ENCODE measurements at regions of chr7 and their contacts with region 1.

Region 1: GRCh38 chr7:131625817-131626372 is 69.5 kb upstream of the PODXL start:
- DNase-seq: peak; percentile 55 to 69
- ATAC-seq: peak in 3 of 4 donors; percentile 40 to 56 (median 41)
- H3K4me3 ChIP-seq: no peak overlapping the region
- H3K27ac ChIP-seq: no peak overlapping the region
- H3K4me1 ChIP-seq: no peaks in the 10 kb centered on the region
- H3K27me3 ChIP-seq: no peaks in the 10 kb centered on the region
- CTCF ChIP-seq: no peak

Region 2: DNA sequence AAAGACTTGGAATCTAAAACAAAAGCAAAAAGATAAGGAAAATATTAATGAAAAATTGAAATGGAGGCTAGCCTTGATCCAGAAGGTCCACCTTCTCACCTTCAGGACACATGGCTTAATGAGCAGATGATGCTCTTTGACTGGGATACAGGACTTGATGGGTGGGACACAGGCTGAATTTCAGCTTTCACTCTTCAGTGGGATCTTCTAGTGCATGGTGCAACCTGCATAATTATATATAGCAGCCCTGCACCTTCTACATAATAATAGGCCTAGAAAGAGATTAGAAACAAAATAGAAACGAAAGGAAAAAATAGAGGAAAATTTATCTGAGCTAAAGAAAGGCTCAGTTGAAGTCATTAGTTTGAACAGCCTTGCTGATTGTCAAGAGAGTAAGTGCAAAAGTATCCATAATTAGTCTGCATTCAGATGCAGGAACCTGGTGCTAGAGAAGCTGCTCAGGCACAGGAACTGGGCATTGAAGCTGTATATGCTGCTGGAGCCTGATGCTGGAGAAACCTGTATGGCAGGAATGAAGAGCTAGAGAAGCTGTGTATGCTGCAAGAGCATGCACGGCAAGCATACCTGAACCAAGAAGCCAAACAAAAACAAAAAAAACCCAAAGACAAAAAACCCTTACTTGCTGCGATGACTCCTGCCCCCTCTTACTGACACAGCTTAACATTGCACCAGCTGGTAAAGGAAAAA is 278.9 kb before region 1 on chr7:
- intact Hi-C with region 1: no loop called
- DNase-seq: no peak
- ATAC-seq: peak in 2 of 4 donors; percentile 25 to 40
- H3K4me3 ChIP-seq: no peak overlapping the region
- H3K27ac ChIP-seq: no peak overlapping the region
- H3K4me1 ChIP-seq: peaks cover 37% of the 10 kb centered on the region
- H3K27me3 ChIP-seq: no peaks in the 10 kb centered on the region
- CTCF ChIP-seq: no peak

Region 3: DNA sequence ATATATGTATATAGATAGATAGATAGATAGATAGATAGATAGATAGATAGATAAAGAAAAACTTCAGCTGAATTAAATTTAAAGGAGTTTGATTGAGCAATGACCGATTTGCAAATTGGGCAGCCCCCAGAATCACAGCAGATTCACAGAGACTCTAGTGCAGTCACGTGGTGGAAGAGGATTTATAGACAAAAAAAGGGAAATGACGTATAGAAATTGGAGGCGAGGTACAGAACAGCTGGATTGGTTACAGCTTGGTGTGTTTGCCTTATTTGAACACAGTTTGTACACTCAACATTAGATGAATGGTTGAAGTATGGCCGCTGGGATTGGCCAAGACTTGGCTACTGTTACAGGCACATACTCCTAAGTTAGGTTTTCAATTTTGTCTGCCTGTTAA is 61.3 kb before region 1 on chr7:
- intact Hi-C with region 1: loop called in 1 of 2 experiments (anchors 5 kb)
- DNase-seq: no peak
- ATAC-seq: no peak
- H3K4me3 ChIP-seq: no peak overlapping the region
- H3K27ac ChIP-seq: no peak overlapping the region
- H3K4me1 ChIP-seq: no peaks in the 10 kb centered on the region
- H3K27me3 ChIP-seq: peaks cover 0 to 3% (median 0%) of the 10 kb centered on the region in 3 donors
- CTCF ChIP-seq: no peak

Region 4: DNA sequence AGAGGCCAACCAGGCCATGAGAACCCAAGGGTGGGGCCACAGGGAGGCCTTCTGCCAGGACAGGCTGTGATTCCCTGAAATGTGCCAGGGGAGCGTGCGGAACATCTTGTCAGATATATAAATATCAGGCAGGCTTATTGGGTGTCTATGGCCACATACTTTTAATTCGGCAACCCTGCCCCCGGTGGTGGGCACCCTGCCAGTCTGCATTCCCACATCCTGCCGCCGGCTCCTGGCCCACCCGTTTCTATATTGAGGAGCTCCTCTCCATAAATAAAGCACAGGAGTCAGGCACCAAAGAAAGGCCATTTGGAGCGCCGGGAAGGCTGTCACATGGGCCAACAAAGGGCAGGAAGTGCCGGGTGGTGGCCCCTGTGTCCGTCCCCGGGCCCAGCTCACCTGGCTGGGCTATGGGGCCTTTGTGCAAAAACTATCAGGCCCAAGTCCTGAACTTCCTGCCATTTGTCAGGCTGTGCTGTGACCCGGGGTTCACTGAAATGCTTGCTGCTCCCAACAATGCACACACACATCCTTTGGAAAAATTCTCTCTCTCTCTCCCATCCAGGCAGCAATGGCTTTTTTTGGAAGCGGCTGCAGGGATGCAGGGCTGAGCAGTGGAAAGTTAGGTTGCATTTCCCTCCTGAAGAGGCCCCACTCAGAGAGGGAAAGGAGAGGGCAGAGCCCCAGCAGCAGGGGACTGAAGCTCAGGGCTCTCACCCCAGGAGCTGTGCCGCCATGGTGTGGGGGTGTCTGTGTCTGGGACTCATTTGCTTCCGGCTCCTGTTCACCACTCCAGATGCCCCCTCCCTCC is 44.4 kb before region 1 on chr7:
- intact Hi-C with region 1: no loop called
- DNase-seq: peak; percentile 71 to 95
- ATAC-seq: peak; percentile 88 to 96 (median 91)
- H3K4me3 ChIP-seq: peak overlapping the region; percentile 36
- H3K27ac ChIP-seq: peak overlapping the region; percentile 78
- H3K4me1 ChIP-seq: peaks cover 16% of the 10 kb centered on the region
- H3K27me3 ChIP-seq: no peaks in the 10 kb centered on the region
- CTCF ChIP-seq: peak; percentile 22